ENCODE measurements at regions of chr10 and their contacts with region 1.

Region 1: GRCh38 chr10:110803830-110804338 is 67.8 kb upstream of the PDCD4 start:
- DNase-seq: no peak
- H3K4me3 ChIP-seq: no peak overlapping the region
- H3K27me3 ChIP-seq: peaks cover 5% of the 10 kb centered on the region
- CTCF ChIP-seq: peak; percentile 80

Region 2: DNA sequence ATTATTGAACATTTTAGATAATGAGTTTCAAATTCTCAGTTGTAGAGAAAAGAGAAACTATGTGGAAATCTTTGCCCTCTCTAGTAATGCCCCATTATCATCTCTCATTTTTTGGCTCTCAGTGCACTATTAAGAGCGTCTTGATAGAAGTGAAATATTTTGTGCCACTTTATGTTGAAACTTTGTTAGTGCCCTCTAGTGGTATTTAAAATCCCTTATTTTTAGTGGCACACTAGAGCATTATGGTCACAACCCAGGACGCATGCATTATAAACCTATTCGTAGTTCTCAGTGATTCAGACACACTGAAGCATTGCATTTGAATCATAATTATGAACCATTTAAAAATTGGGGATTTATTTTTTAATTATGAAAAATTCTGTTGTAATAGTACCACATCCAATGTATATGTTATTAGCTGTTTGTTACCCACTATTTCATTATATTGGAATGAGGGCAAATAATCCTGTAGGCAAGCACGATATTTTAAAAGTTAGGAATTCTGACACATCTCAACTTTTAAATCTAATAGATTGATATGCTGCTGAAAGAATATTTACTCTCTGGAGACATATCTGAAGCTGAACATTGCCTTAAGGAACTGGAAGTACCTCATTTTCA is 89.8 kb after region 1 on chr10:
- CTCF ChIA-PET with region 1: interaction called, 27 read pairs
- POLR2A ChIA-PET with region 1: no interaction called
- DNase-seq: no peak
- H3K4me3 ChIP-seq: no peak overlapping the region
- H3K27me3 ChIP-seq: no peaks in the 10 kb centered on the region
- CTCF ChIP-seq: peak; percentile 48

Region 3: GRCh38 chr10:110918269-110918642 is 114.4 kb after region 1 on chr10:
- CTCF ChIA-PET with region 1: interaction called, 4 read pairs
- POLR2A ChIA-PET with region 1: interaction called, 14 read pairs
- DNase-seq: peak; percentile 82
- H3K4me3 ChIP-seq: peak overlapping the region; percentile 67
- H3K27me3 ChIP-seq: no peaks in the 10 kb centered on the region
- CTCF ChIP-seq: 0 out of 2 replicates have a peak, but pooled peaks have one; percentile 4

Region 4: GRCh38 chr10:111037864-111038263 is 234.0 kb after region 1 on chr10:
- CTCF ChIA-PET with region 1: no interaction called
- POLR2A ChIA-PET with region 1: interaction called, 14 read pairs
- DNase-seq: no peak
- H3K4me3 ChIP-seq: no peak overlapping the region
- H3K27me3 ChIP-seq: no peaks in the 10 kb centered on the region
- CTCF ChIP-seq: peak; percentile 13; the same call in 1 of the 2 replicates